Activated CD4-positive, alpha-beta T cell treated with anti-CD3 and anti-CD28 coated beads for 36 hours (primary cell): ENCODE measurements at regions of chr1 and their contacts with region 1.

Region 1: DNA sequence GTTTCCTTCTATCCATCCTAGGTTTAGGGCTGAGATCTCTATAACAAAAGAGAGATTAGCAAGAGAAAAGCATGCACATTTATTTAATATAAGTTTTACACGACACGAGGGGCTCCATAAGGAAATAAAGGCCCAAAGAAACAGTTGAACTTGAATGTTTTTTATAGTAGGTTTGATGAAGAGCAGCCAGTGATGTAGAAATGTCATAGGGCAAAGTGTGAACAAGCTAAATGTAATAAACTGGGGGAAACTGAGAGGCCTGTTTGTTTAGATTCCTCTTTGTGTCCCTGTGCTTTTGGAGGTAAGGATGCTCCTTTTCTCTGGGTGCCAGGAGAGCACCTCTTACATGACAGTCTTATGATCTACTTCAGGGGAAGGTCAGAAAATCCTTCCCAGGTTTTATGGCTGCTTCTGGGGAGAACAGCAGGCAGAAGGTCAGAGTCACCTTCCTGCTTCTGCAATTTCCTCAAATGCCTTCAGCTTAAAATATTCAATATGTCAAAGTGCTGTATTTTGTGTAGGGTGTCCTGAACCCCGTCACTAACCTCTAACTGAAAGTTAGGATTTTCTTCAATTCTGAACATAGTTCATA is 9.5 kb upstream of the HORMAD1 start:
- DNase-seq: no peak
- ATAC-seq: no peak
- H3K4me3 Mint-ChIP-seq: no peak overlapping the region
- H3K27ac Mint-ChIP-seq: no peak overlapping the region
- H3K4me1 Mint-ChIP-seq: no peaks in the 10 kb centered on the region
- H3K27me3 Mint-ChIP-seq: no peaks in the 10 kb centered on the region

Region 2: DNA sequence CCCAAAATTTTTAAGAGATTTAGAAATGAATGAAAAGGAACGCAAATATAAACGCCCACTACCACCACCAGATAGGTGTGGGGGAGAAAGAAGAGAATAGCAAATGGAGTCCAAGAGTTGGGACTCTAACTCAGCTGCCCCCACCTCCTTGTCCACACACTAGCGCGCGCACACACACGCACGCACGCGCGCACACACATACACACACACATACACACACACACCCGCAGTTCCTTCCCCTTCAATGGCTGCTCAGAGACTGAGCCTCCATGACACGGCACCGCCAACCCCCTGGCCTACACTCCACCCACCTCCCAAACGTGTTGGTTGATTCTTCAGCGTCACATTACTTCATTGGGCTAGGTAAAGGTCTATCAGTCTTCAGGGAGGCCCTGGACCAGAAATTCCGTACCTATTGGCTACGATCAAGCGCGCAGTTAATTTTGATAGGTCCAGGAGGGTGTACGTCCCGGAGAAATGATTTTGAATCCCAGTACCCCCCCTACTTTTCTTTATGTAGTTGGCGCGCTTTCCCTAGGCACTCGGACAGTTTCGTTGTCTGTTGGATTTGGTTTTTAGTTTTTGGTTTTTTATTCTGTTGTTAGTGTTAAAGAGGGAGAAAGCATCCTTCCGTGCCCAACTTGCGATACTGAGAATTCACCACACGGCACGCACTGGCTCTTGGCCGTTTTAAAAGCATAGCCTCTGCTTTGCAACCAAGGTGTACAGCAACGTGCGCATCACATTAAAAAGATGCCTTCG is 494.2 kb before region 1 on chr1 and contains the start of gene ANP32E:
- CTCF ChIA-PET with region 1: no interaction called
- POLR2A ChIA-PET with region 1: no interaction called
- intact Hi-C with region 1: no loop called
- DNase-seq: peak; percentile 96
- ATAC-seq: peak; percentile 91
- H3K4me3 Mint-ChIP-seq: no peak within 1 kb of the TSS
- H3K27ac Mint-ChIP-seq: peak within 1 kb of the TSS; percentile 99
- H3K4me1 Mint-ChIP-seq: peaks cover 14% of the 10 kb centered on the region
- H3K27me3 Mint-ChIP-seq: no peaks in the 10 kb centered on the region
- total RNA-seq, gene ANP32E: 176 to 212 TPM

Region 3: GRCh38 chr1:150397402-150398032 is 332.7 kb before region 1 on chr1:
- CTCF ChIA-PET with region 1: no interaction called
- POLR2A ChIA-PET with region 1: no interaction called
- intact Hi-C with region 1: no loop called
- DNase-seq: no peak
- ATAC-seq: no peak
- H3K4me3 Mint-ChIP-seq: no peak overlapping the region
- H3K27ac Mint-ChIP-seq: peak overlapping the region; percentile 65
- H3K4me1 Mint-ChIP-seq: peaks cover 23% of the 10 kb centered on the region
- H3K27me3 Mint-ChIP-seq: no peaks in the 10 kb centered on the region

Region 4: DNA sequence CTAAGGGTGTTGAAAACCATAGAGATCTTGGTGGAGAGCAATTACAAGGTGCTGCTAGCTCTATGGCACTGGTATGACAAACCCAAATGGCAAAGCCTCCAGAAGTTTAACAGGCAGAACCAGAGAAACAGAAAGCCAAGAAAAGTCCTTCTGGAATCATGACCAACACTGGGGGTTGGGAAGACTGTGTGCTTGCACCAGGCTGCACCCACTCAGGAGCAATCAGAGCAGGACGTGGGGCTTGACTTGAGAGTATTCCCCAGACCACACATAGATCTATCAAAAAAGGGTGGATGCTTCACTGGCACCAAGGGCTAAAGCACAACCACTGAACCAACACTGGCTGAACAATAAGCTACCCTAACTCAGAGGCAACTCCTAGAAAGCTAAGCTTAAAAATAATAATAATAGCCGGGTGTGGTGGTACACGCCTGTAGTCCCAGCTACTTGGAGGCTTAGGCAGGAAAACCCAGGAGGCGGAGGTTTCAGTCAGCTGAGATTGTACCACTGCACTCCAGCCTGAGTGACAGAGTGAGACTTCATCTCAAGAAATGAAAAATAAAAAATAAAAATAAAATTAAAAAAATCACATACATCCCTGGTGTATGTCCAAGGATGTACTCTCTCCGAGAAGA is 80.7 kb before region 1 on chr1:
- CTCF ChIA-PET with region 1: no interaction called
- POLR2A ChIA-PET with region 1: no interaction called
- intact Hi-C with region 1: loop called in 1 of 2 experiments (anchors 5 kb)
- DNase-seq: no peak
- ATAC-seq: no peak
- H3K4me3 Mint-ChIP-seq: no peak overlapping the region
- H3K27ac Mint-ChIP-seq: no peak overlapping the region
- H3K4me1 Mint-ChIP-seq: peaks cover 3% of the 10 kb centered on the region
- H3K27me3 Mint-ChIP-seq: no peaks in the 10 kb centered on the region

Region 5: DNA sequence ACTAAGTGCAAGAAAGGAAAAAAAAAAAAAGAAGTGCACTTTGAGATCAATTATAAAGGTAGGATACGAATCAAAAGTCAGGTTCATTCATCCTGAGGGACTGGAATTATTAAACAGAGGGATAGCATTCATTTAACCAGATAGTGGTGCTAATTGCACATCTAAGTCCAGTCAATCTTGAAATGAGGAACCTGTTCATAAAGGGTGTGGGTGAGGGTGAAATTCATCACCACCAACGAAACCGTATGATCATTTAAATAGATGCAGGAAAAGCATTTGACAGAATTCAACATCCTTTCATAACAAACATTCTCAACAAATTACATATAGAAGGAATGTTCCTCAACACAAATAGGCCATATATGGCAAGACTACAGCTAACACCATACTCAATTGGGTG is 29.8 kb after region 1 on chr1:
- CTCF ChIA-PET with region 1: no interaction called
- POLR2A ChIA-PET with region 1: no interaction called
- intact Hi-C with region 1: no loop called
- DNase-seq: no peak
- ATAC-seq: no peak
- H3K4me3 Mint-ChIP-seq: no peak overlapping the region
- H3K27ac Mint-ChIP-seq: no peak overlapping the region
- H3K4me1 Mint-ChIP-seq: peaks cover 31% of the 10 kb centered on the region
- H3K27me3 Mint-ChIP-seq: no peaks in the 10 kb centered on the region